Naive thymus-derived CD4-positive, alpha-beta T cell (primary cell): ENCODE measurements at regions of chr10 and their contacts with region 1.

Region 1: DNA sequence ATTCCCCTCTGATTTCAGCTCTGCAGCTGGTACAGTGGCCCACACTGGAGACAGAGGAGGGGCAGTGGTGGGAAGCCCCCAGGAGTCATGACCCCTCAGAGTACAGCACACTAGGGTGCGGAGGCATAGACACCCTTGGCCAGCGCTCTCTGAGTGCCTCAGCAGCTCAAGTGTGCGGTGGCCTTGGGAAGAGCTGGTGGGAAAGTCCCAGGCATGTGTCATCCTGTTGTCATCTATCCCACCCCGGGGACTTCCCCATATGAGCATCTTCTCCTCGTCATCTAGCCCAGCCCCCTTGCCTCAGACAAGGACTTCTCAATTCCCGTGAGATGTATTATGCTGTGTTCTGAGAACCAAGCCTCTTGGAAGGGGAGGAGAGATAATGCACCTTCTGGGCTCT is 15.6 kb upstream of the PPIF start:
- DNase-seq: peak in 6 of 9 donors; percentile 25 to 82 (median 42)
- ATAC-seq: peak; percentile 95
- H3K4me3 ChIP-seq: no peak overlapping the region
- H3K4me3 Mint-ChIP-seq: peak overlapping the region in 1 of 10 donors; percentile 52
- H3K27ac ChIP-seq: no peak overlapping the region
- H3K27ac Mint-ChIP-seq: peak overlapping the region in 8 of 9 donors; percentile 6 to 87 (median 52)
- H3K4me1 ChIP-seq: peaks cover 4 to 14% of the 10 kb centered on the region in 2 donors
- H3K4me1 Mint-ChIP-seq: peaks cover 0 to 44% (median 21%) of the 10 kb centered on the region in 7 donors
- H3K27me3 ChIP-seq: no peaks in the 10 kb centered on the region
- H3K27me3 Mint-ChIP-seq: no peaks in the 10 kb centered on the region

Region 2: GRCh38 chr10:78029269-78030226 is 1302.2 kb before region 1 on chr10 and contains the start of gene POLR3A:
- CTCF ChIA-PET with region 1: no interaction called
- POLR2A ChIA-PET with region 1: interaction called, 3 read pairs
- intact Hi-C with region 1: loop called in 1 of 2 experiments (anchors 5 kb)
- DNase-seq: peak; percentile 79 to 94 (median 90)
- ATAC-seq: peak; percentile 77
- H3K4me3 ChIP-seq: peak within 1 kb of the TSS; percentile 99
- H3K4me3 Mint-ChIP-seq: peak within 1 kb of the TSS; percentile 92 to 100 (median 99)
- H3K27ac ChIP-seq: peak within 1 kb of the TSS; percentile 89
- H3K27ac Mint-ChIP-seq: peak within 1 kb of the TSS; percentile 88 to 99 (median 95)
- H3K4me1 ChIP-seq: peaks cover 12 to 19% of the 10 kb centered on the region in 2 donors
- H3K4me1 Mint-ChIP-seq: peaks cover 22 to 50% (median 37%) of the 10 kb centered on the region in 7 donors
- H3K27me3 ChIP-seq: no peaks in the 10 kb centered on the region
- H3K27me3 Mint-ChIP-seq: no peaks in the 10 kb centered on the region
- total RNA-seq, gene POLR3A: 12.0 to 20.9 (median 19.0) TPM

Region 3: DNA sequence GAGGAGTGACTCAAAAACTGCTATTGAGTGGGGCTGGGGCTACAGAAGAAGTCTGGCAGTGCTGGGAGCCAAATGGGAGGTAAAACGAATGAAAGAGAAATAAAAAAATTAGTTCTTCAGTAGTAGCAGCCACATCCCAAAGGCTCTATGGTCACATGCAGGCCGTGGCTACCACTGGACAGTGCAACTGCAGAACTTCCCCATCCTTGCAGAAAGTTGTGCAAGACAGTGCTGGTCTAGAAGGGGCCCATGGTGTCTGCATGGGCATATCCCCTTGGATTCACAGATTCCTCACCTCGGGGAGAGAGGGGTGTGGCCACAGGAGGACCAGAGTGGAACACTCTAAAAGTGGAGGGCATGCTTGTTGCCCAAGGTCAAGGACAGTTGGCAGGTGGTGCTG is 1250.4 kb before region 1 on chr10:
- CTCF ChIA-PET with region 1: no interaction called
- POLR2A ChIA-PET with region 1: no interaction called
- intact Hi-C with region 1: no loop called
- DNase-seq: no peak
- ATAC-seq: no peak
- H3K4me3 ChIP-seq: no peak overlapping the region
- H3K4me3 Mint-ChIP-seq: no peak overlapping the region
- H3K27ac ChIP-seq: no peak overlapping the region
- H3K27ac Mint-ChIP-seq: no peak overlapping the region
- H3K4me1 ChIP-seq: no peaks in the 10 kb centered on the region
- H3K4me1 Mint-ChIP-seq: no peaks in the 10 kb centered on the region
- H3K27me3 ChIP-seq: no peaks in the 10 kb centered on the region
- H3K27me3 Mint-ChIP-seq: peaks cover 0 to 10% (median 5%) of the 10 kb centered on the region in 5 donors

Region 4: GRCh38 chr10:79316671-79317431 is 14.9 kb before region 1 on chr10:
- CTCF ChIA-PET with region 1: no interaction called
- POLR2A ChIA-PET with region 1: interaction called, 11 read pairs
- intact Hi-C with region 1: loop called (anchors 1 to 2 kb)
- DNase-seq: peak in 1 of 9 donors; percentile 12
- ATAC-seq: peak; percentile 13
- H3K4me3 ChIP-seq: peak overlapping the region; percentile 9
- H3K4me3 Mint-ChIP-seq: peak overlapping the region in 9 of 10 donors; percentile 32 to 86 (median 65)
- H3K27ac ChIP-seq: no peak overlapping the region
- H3K27ac Mint-ChIP-seq: peak overlapping the region in 6 of 9 donors; percentile 31 to 95 (median 88)
- H3K4me1 ChIP-seq: peaks cover 39 to 54% of the 10 kb centered on the region in 2 donors
- H3K4me1 Mint-ChIP-seq: peaks cover 53 to 62% (median 60%) of the 10 kb centered on the region in 7 donors
- H3K27me3 ChIP-seq: no peaks in the 10 kb centered on the region
- H3K27me3 Mint-ChIP-seq: peaks cover 0 to 4% (median 0%) of the 10 kb centered on the region in 5 donors